Right ventricle myocardium inferior (tissue), 1 donor: ENCODE measurements at regions of chr1 and their contacts with region 1.

Region 1: GRCh38 chr1:43529206-43529731 is 1.4 kb upstream of the PTPRF start:
- DNase-seq: peak; percentile 92
- ATAC-seq: peak; percentile 68

Region 2: DNA sequence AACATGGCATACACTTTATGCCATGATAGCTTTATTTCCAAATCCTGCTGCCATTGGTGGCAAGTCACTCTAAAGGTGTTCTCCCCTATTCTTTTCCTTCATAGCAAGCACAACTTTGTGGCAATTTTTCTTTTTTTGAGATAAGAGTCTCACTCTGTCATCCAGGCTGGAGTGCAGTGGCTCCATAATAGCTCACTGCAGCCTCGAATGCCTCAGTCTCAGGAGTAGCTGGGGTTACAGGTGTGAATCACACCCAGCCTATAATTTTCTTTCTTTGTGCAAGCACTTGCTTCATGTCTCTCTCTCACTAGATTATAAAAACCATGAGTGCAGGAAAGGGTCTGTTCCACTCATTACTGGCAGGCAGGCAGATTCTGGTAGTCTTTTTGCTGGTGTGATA is 115.3 kb after region 1 on chr1:
- intact Hi-C with region 1: no loop called
- DNase-seq: no peak
- ATAC-seq: no peak

Region 3: DNA sequence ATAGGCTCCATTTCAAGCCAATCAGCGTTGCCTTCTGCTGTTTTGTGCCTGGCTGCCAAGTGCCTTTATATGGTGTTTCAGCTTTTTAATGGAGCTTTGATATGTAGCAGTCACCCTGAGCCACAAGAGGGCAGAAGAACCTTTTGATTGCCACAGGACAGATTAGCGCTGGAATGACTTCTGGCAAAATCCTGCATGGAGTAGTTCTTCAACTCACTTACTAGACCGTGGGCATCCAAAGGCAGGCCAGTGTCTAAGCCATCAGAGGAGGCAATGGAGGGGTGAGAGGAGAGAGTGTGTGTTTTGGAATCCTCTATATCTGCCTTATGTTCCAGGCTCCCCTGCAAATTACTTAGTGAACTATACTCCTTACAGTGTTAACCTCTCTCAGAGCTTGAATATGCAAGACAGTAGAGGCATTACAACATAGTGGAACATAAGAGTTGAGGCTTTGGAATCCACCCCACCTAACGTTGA is 234.3 kb after region 1 on chr1:
- intact Hi-C with region 1: loop called (anchors 10 kb)
- DNase-seq: no peak
- ATAC-seq: peak; percentile 94